ENCODE measurements at regions of chr20 and their contacts with region 1.

Region 1: DNA sequence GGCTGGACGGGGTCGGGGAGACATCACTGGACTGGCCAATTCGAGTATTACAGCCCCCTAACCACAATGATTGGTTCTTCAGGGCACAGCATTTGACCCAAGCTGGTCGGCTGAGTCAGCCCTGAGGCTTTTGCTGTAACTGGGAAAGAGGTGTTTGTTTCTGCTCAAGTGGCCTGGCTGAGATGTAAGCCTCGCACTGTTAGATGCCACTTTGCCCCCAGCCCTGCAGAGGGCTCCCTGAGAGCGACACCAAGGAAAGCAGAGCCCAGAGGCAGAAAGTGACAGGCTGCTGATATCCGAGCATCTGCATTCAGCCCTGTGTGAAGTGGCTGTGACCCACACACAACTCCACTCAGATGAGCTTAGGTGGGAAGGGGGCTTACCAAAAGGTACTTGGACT is 19.4 kb downstream of the ERGIC3 start:
- DNase-seq: peak; percentile 82
- H3K4me3 ChIP-seq: no peak overlapping the region
- H3K27ac ChIP-seq: peak overlapping the region; percentile 43
- H3K4me1 ChIP-seq: peaks cover 13% of the 10 kb centered on the region
- CTCF ChIP-seq: peak; percentile 83

Region 2: DNA sequence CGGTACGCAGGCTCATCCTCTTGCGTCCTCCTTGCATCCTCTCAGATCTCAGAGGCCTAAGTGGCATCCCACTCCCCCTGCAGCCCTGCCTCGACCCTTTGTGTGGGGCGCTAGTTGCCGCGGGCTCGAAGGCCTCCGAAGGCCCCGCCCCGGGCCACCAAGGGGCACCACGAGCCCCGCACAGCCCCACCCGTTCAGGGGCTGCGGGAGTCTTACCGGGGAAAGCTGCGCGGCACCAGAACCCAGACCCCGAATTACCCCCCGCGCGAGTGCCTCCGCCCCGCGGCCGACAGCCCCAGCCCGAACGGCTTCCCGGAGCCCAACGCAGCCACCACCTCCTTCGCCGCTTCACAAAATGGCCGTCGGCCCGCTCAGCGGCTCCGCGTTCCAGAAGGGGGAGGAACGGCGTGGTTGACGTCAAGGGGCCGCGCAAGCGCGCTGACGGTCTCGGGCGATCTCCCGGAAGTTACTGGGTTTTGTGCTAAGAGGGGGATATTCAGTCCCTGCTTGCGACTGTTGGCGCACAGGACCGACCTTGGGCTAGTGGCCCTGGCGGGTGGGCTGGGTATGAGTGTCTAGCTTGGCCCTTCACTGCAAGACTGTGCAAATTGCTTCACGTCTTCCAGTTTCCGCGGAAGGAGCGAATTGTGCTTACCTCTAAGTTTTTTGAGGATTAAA is 103.4 kb after region 1 on chr20 and contains the starts of genes CPNE1 and RBM12:
- CTCF ChIA-PET with region 1: no interaction called
- POLR2A ChIA-PET with region 1: no interaction called
- intact Hi-C with region 1: loop called (anchors 10 kb)
- DNase-seq: peak; percentile 95
- H3K4me3 ChIP-seq: peak within 1 kb of the TSS; percentile 76
- H3K27ac ChIP-seq: peak within 1 kb of the TSS; percentile 74
- H3K4me1 ChIP-seq: peaks cover 31% of the 10 kb centered on the region
- CTCF ChIP-seq: no peak
- total RNA-seq, gene CPNE1: 83.3 and 83.7 TPM in 2 replicates
- total RNA-seq, gene RBM12: 63.8 and 66.3 TPM in 2 replicates

Region 3: GRCh38 chr20:35883778-35884540 is 322.7 kb after region 1 on chr20:
- CTCF ChIA-PET with region 1: no interaction called
- POLR2A ChIA-PET with region 1: no interaction called
- intact Hi-C with region 1: loop called (anchors 1 kb)
- DNase-seq: peak; percentile 72
- H3K4me3 ChIP-seq: no peak overlapping the region
- H3K27ac ChIP-seq: no peak overlapping the region
- H3K4me1 ChIP-seq: no peaks in the 10 kb centered on the region
- CTCF ChIP-seq: peak; percentile 86